Naive thymus-derived CD8-positive, alpha-beta T cell (primary cell): ENCODE measurements at regions of chr10 and their contacts with region 1.

Region 1: GRCh38 chr10:99620713-99621453 is 644 bp upstream of the SLC25A28 start:
- DNase-seq: peak; percentile 70 to 96 (median 85)
- ATAC-seq: peak; percentile 89 to 90
- H3K4me3 Mint-ChIP-seq: peak overlapping the region; percentile 74 to 96 (median 90)
- H3K27ac Mint-ChIP-seq: peak overlapping the region; percentile 77 to 99 (median 96)
- H3K4me1 Mint-ChIP-seq: peaks cover 23 to 49% (median 43%) of the 10 kb centered on the region in 4 donors
- H3K27me3 Mint-ChIP-seq: no peaks in the 10 kb centered on the region

Region 2: GRCh38 chr10:99430451-99431189 is 190.3 kb before region 1 on chr10 and contains the start of gene GOT1:
- POLR2A ChIA-PET with region 1: interaction called, 18 read pairs
- DNase-seq: peak; percentile 83 to 96 (median 92)
- ATAC-seq: peak; percentile 94 to 97
- H3K4me3 Mint-ChIP-seq: peak within 1 kb of the TSS; percentile 94 to 99 (median 98)
- H3K27ac Mint-ChIP-seq: peak within 1 kb of the TSS; percentile 91 to 98 (median 95)
- H3K4me1 Mint-ChIP-seq: peaks cover 23 to 46% (median 40%) of the 10 kb centered on the region in 4 donors
- H3K27me3 Mint-ChIP-seq: no peaks in the 10 kb centered on the region
- polyA plus RNA-seq, gene GOT1: 17.3 to 21.2 (median 17.8) TPM

Region 3: GRCh38 chr10:99659031-99659867 is 38.4 kb after region 1 on chr10 and contains the start of gene ENTPD7:
- POLR2A ChIA-PET with region 1: interaction called, 16 read pairs
- DNase-seq: peak; percentile 70 to 91 (median 82)
- ATAC-seq: peak; percentile 97 to 99
- H3K4me3 Mint-ChIP-seq: peak within 1 kb of the TSS; percentile 85 to 97 (median 90)
- H3K27ac Mint-ChIP-seq: peak within 1 kb of the TSS; percentile 32 to 93 (median 75)
- H3K4me1 Mint-ChIP-seq: peaks cover 9 to 29% (median 23%) of the 10 kb centered on the region in 4 donors
- H3K27me3 Mint-ChIP-seq: peaks cover 3 to 9% (median 8%) of the 10 kb centered on the region in 5 donors
- polyA plus RNA-seq, gene ENTPD7: 0.33 to 0.83 (median 0.82) TPM

Region 4: DNA sequence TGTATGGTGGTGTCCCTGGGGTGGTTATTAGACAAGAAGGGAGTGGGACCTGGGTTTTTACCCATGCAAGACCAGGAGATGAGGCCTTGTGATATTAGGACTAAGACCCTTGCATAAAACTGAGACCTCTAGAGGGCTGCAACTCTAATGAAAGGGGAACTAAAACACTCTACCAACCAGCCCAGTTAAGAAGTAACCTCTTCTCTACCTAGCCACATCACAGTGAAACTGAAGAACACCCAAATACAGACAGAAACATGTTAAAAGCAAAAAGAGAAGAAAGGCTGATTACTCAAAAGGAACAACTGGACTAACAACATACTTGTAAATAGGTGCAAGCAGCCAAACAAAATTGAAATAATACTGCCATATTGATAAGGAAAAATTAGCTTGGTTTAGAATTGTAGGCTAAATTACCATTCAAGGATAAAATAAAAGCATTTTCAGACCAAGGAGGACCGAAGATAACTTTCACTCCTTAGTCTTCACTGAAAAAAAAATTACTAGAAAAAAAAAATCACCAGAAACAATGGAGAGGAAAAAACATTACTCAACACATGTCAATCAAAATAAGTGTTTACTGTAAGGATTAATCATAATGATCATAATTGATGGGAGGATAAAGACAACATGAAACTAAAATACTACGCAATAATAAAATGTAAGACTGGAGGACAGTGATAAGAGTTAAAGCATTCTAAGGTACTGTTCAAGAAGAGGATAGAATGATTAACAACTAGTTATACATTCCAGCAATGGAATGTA is 537.3 kb after region 1 on chr10:
- POLR2A ChIA-PET with region 1: no interaction called
- DNase-seq: no peak
- ATAC-seq: no peak
- H3K4me3 Mint-ChIP-seq: no peak overlapping the region
- H3K27ac Mint-ChIP-seq: peak overlapping the region in 3 of 10 donors; percentile 20 to 44 (median 39)
- H3K4me1 Mint-ChIP-seq: peaks cover 3 to 17% (median 9%) of the 10 kb centered on the region in 4 donors
- H3K27me3 Mint-ChIP-seq: no peaks in the 10 kb centered on the region